ENCODE measurements at regions of chr14 and their contacts with region 1.

Region 1: DNA sequence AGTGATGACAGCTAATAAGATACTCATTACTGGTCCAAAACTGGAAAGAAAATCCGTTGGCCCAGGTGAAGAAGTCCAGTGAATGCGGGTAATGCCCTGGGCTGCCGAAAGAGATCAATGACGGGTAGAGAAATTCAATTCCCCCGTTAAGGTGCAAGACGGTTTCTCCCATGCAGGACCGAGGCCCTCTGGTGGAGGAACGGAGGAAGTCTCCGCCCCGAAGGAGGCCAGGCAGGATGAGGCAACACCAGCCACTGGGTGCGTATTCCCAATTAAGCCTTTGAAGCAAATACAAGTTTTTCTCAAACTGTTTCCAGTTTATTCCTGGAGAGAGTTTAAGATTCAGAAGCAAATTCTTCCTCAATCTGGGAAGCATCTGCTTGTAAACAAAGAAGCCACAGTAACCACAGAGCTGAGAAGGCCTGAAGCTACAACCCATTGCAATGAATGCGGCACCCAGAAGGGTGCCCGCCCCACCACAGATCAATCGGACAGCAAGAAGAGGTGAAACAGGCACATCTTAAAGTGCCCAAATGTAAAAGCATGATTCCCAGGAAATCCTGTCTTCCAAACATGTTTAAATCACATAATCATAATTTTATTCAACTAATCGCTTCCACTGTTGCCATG is 118.5 kb downstream of the TTC7B start:
- DNase-seq: peak; percentile 84
- ATAC-seq: peak; percentile 93

Region 2: GRCh38 chr14:90301668-90302090 is 396.0 kb before region 1 on chr14:
- intact Hi-C with region 1: loop called in 1 of 2 experiments (anchors 5 kb)
- DNase-seq: no peak
- ATAC-seq: peak; percentile 71 to 83

Region 3: DNA sequence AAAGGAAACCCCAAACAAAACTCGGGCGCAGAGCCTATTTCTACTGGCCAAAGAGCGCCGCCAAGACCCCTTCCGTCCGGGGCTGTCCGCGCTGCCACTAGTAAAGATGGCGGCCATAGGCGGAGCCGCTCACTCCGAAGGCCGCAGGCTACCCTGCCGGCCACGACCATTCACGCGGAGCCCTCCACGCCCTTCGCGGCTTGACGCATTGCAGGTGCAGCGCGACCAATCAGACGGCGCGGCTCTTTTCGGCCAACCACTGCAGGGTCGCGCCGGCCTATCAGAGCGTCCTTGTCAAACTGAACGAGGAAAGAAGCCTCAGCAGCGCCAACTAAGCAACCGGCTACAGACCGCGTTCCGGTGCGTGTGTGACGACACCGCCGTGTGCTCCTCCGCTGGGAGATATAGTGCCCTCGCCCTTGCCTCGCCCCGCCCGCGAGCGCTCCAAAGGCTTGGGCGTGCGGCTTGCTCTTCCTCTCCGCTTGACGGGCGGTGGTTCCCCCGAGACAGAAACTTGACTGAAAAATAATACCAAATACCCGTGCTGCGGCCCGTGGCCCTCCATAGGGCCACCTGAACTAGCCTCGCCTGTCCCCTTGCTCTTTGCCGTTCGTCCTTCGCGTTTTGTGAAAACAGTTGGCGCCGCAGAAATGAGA is 314.5 kb before region 1 on chr14:
- intact Hi-C with region 1: loop called in 1 of 2 experiments (anchors 5 kb)
- DNase-seq: peak; percentile 100
- ATAC-seq: peak; percentile 93 to 96

Region 4: GRCh38 chr14:90518941-90519256 is 178.8 kb before region 1 on chr14:
- intact Hi-C with region 1: loop called in 1 of 2 experiments (anchors 10 kb)
- DNase-seq: no peak
- ATAC-seq: no peak

Region 5: DNA sequence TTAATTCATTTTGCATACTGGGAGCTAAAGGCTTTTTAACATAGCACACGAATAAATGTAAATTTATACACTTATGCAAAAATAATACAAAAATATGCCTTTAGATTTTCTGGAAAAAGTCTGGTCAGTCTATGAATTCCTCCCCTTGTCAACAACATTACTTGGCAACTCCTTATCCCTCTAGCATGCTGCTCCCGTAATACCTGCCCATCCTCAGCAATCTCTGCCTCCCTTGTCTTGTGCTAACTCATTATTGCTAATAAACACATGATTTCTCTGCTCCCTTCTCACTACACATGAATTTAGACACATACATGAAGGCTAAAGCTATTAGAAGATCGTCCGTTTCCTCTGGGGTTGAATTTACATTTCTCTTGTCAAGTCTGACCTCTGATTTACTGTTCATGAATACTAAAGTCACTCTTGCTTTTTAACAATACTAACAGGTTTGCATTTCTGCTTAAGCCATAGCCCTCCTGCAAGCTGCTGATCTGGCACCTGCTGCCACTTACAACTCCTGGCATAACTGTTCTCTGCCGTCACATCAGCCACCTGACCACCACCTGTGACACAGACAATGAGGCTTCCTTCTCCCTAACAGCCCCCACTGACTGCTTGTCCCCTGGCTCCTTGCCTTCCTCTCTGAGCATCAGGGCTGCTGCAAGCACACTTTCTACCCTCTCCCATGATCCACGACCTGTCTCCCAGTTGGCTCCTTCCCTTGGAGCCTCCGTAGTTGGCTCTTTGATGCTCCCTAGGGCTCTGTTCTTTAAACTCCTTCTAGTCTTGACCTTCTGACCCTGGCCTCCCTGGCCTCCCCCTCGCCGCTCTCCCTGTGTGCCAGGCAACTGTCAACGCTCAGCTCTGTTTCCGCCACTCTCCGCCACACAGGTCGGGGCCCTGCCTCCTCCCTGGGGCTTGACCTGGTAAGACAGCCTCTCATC is 123.2 kb before region 1 on chr14:
- intact Hi-C with region 1: no loop called
- DNase-seq: peak; percentile 54
- ATAC-seq: peak; percentile 55 to 84

Region 6: DNA sequence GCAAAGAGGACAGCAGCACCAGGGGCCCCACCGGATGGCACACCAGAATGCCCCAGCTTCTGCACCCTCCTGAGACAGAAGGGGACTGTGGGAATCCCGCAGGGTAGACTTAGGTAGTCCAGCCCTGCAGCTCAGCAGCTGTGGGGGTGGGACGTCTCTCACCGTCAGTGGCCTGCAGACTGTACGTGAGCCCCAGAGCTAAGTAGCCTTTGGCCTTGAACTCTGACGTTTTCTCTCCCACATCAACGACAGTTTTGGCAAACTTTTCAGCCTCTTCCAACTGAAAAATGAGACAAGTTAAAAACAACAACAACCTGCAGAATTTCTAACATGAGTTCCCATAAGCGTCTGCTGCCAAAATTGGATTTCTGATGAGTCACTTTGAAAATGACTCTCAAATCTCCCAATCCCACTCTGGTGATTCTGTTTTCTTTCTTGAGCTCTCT is 42.8 kb before region 1 on chr14:
- intact Hi-C with region 1: no loop called
- DNase-seq: no peak
- ATAC-seq: no peak

Region 7: GRCh38 chr14:90883782-90884181 is 186.1 kb after region 1 on chr14:
- intact Hi-C with region 1: no loop called
- DNase-seq: no peak
- ATAC-seq: no peak

Measured in left cardiac atrium (tissue), 4 donors.